Left ventricle myocardium superior (tissue), 1 donor: ENCODE measurements at regions of chr3 and their contacts with region 1.

Region 1: DNA sequence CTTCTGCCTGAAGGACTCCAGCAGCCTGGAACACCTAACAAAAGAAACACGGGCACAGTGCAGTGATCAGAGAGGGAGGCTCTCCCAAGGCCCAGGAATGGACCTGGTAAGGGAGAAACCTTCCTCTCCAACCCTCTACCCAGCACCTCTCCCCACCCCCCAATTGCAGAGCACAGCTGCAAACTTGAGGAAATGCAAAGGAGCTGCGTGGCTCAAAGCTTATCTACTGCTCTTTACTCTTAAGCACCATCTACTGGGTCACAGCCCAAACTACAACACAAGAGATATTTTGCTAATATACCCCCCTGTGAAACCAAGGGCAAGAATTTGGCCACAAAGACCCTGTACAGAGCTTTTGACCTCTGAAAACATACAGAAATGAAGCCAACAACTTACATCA is 328.3 kb downstream of the OXSM start:
- DNase-seq: no peak
- ATAC-seq: peak; percentile 26

Region 2: GRCh38 chr3:25904206-25904605 is 214.0 kb before region 1 on chr3:
- intact Hi-C with region 1: loop called (anchors 10 kb)
- DNase-seq: no peak
- ATAC-seq: peak; percentile 82